ENCODE measurements at regions of chr13 and their contacts with region 1.

Region 1: GRCh38 chr13:28792992-28793391 is 27.1 kb upstream of the MTUS2 start:
- DNase-seq: no peak
- ATAC-seq: peak; percentile 70
- H3K4me3 ChIP-seq: no peak overlapping the region
- H3K27ac ChIP-seq: no peak overlapping the region
- H3K4me1 ChIP-seq: no peaks in the 10 kb centered on the region
- H3K27me3 ChIP-seq: no peaks in the 10 kb centered on the region

Region 2: GRCh38 chr13:28324181-28324789 is 468.7 kb before region 1 on chr13:
- intact Hi-C with region 1: loop called (anchors 5 to 10 kb)
- DNase-seq: peak in 1 of 2 donors; percentile 54
- ATAC-seq: peak; percentile 73
- H3K4me3 ChIP-seq: no peak overlapping the region
- H3K27ac ChIP-seq: no peak overlapping the region
- H3K4me1 ChIP-seq: no peaks in the 10 kb centered on the region
- H3K27me3 ChIP-seq: peaks cover 0 to 2% of the 10 kb centered on the region in 2 donors

Region 3: DNA sequence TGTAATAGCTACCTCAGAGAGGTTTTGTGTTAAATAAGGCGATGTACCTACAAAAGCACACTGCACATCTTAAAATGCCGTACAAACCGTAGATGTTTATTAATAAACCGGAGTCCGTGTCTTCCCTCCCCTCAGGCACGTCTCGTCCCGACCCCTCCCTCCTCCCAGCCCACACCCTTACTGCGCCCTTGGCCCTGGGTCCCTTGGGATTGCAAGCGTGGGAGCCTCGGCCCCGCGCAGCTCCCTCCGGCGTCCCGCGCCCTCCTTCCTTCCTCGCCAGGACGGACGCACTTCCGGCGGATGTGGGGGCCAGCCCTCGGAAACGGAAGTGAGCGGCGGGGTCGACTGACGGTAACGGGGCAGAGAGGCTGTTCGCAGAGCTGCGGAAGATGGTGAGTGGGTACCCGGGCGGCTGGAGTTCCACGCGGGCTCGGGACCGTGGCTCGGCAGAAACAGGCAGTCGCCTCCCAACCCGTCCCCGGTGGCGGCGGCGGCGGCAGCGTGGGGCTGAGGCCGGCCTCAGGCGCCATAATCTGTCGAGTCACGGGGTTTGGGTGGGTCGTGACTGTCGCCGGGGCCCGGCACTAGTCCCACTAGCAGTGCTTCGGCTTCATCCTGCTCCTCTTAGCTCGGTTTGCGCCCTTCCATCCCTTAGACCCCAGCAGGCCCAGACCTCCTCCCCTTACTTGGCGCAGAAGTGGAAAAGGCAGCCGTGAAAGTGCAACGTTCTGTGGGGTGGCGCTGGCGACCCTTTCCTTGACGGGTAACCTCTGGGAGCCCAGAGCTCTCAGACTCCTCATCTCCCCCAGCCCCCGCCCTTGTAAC is 134.0 kb before region 1 on chr13 and contains the start of gene POMP:
- intact Hi-C with region 1: loop called in 1 of 2 experiments (anchors 2 kb)
- DNase-seq: peak; percentile 96 to 99
- ATAC-seq: peak; percentile 99
- H3K4me3 ChIP-seq: peak within 1 kb of the TSS; percentile 73 to 91
- H3K27ac ChIP-seq: peak within 1 kb of the TSS; percentile 33 to 68
- H3K4me1 ChIP-seq: peaks cover 1 to 10% of the 10 kb centered on the region in 2 donors
- H3K27me3 ChIP-seq: no peaks in the 10 kb centered on the region
- total RNA-seq, gene POMP: 46.7 to 52.9 TPM

Region 4: DNA sequence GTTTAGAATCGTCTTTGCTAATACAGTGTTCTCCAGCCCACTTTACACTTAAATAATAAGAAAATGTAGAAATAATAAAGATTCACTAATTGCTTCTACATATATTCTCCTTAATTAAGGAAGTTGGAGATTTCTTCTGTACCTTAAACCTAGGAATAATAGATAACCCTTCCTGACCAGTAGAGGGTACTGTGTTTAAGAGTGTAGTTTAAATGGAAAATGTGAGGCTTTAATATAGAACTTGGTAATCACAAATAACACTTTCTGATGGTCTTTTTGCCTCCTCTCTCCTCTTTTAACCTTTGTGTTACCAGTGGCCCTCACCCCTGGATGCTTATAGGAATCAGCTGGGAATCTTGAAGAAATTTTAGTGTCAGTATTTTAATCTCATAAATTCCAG is 113.4 kb before region 1 on chr13:
- intact Hi-C with region 1: loop called (anchors 5 to 10 kb)
- DNase-seq: no peak
- ATAC-seq: no peak
- H3K4me3 ChIP-seq: no peak overlapping the region
- H3K27ac ChIP-seq: no peak overlapping the region
- H3K4me1 ChIP-seq: no peaks in the 10 kb centered on the region
- H3K27me3 ChIP-seq: no peaks in the 10 kb centered on the region

Region 5: DNA sequence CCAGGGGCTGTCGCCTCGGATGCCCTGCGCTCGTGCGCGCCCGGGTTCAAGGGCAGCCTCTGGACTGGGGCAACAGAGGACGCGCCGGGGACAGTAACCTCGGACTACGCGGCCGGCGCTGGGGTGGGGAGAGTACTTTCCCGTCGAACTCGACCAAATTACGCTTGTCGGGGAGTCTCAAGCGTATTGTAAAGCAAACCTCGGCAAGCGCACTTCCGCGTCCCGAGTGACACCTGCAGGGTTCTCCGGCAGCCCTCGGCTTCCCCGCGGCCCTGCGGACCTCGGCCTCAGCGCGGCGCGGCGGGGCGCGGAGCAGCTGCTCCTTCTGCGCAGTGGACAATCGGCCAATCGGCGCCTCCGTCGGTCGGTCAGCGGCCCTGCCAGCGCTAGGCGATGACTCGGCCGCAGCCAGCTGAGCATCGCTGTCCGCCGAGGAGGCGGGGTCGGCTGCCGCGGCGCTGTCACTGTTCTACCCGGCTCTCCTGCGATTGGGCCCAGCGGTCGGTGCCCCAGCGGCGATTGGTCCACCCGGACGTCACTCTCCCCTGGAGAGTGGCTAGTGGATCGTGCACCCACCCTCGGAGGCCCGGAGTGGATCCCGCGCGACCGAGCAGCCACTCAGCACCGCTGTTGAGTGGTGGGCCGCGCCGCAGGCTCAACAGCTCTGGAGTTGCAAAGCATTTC is 74.3 kb before region 1 on chr13 and contains the start of gene SLC46A3:
- intact Hi-C with region 1: loop called (anchors 2 to 10 kb)
- DNase-seq: peak; percentile 100
- ATAC-seq: peak; percentile 99
- H3K4me3 ChIP-seq: peak within 1 kb of the TSS; percentile 45 to 49
- H3K27ac ChIP-seq: peak within 1 kb of the TSS in 1 of 2 donors; percentile 97
- H3K4me1 ChIP-seq: no peaks in the 10 kb centered on the region
- H3K27me3 ChIP-seq: no peaks in the 10 kb centered on the region
- total RNA-seq, gene SLC46A3: 6.7 to 15.1 TPM

Region 6: DNA sequence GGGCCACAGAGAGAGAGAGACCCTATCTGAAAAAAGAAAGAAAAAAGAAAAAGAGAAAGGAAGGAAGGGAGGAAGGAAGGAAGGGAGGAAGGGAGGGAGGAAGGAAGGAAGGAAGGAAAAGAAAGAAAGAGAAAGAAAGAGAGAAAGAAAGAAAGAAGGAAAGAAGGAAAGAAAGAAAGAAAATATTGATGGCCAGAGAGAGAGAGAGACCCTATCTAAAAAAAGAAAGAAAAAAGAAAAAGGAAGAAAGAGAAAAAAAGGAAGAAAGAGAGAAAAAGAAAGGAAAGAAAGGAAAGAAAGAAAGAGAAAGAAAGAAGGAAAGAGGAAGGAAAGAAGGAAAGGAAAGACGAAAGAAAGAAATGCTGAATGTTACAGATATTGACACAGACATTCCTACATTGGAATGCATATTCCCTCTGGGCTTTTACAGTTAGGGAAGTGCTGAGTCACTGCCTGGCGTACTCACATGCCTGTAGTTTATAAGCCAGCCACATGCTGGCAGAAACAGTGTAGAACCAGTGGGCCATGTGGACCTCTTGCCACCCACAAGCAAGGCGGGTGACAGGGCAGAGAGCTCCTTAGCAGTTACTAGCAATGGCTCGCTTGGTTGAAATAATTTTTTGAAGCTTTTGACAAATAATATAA is 39.6 kb before region 1 on chr13:
- intact Hi-C with region 1: loop called (anchors 2 to 5 kb)
- DNase-seq: peak; percentile 79 to 86
- ATAC-seq: peak; percentile 86
- H3K4me3 ChIP-seq: no peak overlapping the region
- H3K27ac ChIP-seq: peak overlapping the region in 1 of 2 donors; percentile 82
- H3K4me1 ChIP-seq: no peaks in the 10 kb centered on the region
- H3K27me3 ChIP-seq: no peaks in the 10 kb centered on the region